ENCODE measurements at regions of chr1 and their contacts with region 1.

Region 1: DNA sequence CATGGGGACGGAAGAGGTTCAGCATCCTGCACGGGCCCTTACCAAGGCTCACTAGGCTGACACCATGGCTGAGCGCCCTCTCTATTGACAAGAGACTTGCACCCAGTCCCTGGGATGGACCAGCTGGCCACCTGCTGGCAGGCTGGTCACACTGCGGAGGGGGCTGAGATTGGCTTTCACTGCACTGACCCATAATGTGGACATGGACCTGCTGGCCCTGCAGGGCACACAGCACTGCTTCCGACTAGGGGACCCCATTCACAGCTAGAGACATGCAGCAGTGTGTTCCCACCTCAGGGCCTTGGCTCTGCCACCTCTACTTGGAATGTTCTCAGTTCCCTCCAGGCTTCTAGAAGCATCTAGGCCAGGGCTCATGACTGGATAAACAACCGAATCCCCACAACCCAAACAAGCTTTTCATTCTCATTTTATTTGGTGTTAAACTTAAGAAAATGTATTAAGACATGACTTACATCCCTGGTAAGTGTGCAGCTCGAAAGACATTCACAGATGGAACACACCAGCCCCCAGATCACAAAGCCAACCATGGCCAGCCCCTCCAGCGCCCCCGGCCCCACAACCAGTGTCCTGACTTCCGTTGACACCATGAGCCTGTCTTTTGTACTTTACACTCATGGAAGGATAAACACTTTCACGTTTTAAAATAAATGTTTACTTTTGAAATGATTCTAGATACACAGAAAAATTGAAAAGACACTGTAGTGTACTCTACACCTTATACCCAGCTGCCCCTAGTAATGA is 9.3 kb upstream of the SRARP start:
- DNase-seq: peak; percentile 74
- ATAC-seq: peak; percentile 83

Region 2: GRCh38 chr1:15749399-15750291 is 245.1 kb before region 1 on chr1:
- intact Hi-C with region 1: no loop called
- DNase-seq: no peak
- ATAC-seq: no peak

Region 3: GRCh38 chr1:15799004-15799936 is 195.5 kb before region 1 on chr1:
- intact Hi-C with region 1: loop called (anchors 5 kb)
- DNase-seq: peak; percentile 75
- ATAC-seq: peak; percentile 57

Region 4: DNA sequence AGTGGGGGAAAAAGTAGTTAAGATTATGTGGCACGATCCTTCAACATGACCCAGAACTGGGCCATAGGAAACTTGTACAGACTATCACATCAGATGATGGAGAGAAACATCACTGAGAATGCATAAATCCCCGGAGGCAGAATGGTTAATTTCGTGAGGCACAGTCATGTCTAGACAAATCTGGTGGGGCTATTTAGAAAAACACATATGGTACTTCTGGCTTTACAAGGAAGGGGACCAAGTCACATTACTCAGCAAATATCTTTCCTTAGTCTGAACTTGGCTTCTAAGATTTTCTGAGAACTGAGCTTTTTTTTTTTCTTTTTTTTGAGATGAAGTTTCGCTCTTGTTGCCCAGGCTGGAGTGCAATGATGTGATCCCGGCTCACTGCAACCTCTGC is 178.1 kb before region 1 on chr1:
- intact Hi-C with region 1: loop called (anchors 2 kb)
- DNase-seq: no peak
- ATAC-seq: no peak

Region 5: GRCh38 chr1:15918962-15919715 is 75.6 kb before region 1 on chr1:
- intact Hi-C with region 1: no loop called
- DNase-seq: no peak
- ATAC-seq: no peak

Region 6: DNA sequence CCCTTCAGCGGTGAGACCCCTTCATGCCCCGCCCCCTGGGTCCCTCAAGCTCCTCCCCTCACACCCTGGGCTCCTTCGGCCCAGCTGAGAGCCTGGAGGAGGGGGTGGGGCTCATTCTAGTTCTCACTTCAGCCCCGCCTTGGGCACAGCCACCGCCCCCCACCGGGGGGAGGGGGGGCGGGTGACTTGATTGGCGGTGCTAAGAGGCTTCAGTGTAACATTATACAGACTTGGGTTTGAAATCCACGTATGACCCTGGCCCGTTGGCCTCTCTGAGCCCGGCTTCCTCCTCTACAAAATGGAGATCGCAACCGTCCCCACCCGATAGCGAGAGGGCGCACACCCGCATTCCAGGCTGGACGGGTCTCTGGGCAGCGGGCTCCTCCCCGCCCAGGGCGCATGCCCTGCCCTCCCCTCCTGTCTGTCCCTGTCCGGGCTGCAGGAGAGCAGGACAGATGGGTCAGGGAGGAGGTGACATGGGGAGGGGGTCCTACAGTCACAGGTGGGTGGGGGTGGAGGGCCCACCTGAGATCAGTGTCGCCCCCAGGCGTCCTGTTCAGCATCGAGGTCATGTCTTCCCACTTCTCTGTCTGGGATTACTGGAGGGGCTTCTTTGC is 53.9 kb after region 1 on chr1:
- intact Hi-C with region 1: no loop called
- DNase-seq: peak; percentile 78
- ATAC-seq: peak; percentile 61